Endothelial cell of umbilical vein (primary cell): ENCODE measurements at regions of chr12 and their contacts with region 1.

Region 1: GRCh38 chr12:103930034-103930786 is at the start of gene HSP90B1:
- DNase-seq: peak; percentile 100
- H3K4me3 ChIP-seq: peak within 1 kb of the TSS; percentile 86 to 98 (median 86)
- H3K27ac ChIP-seq: peak within 1 kb of the TSS; percentile 91
- H3K4me1 ChIP-seq: peaks cover 35% of the 10 kb centered on the region
- H3K27me3 ChIP-seq: no peaks in the 10 kb centered on the region
- CTCF ChIP-seq: no peak
- POLR2A ChIP-seq: peak; percentile 96
- total RNA-seq, gene HSP90B1: 1,253 and 1,310 TPM in 2 replicates

Region 2: DNA sequence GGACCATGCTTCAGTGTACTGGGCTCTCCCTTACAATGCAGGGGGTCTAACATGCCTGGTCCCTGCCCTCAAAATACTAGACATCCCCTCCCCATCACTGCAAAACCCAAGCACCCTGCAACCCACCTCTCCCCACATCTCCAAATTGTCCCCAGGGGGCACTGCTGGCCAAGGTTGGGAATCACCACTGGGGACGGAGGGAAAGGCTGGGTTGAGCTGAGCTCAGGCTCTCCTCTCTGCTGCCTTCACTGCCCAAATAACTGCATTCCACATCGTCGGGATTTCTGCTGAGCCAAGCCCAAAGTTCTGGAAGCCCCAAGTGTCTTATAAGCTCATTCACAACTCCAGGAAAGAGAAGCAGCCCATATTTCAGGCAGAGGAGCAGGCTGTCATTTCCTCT is 158.7 kb before region 1 on chr12:
- CTCF ChIA-PET with region 1: interaction called, 6 read pairs
- POLR2A ChIA-PET with region 1: no interaction called
- dilution Hi-C with region 1: no loop called
- intact Hi-C with region 1: loop called (anchors 1 kb)
- DNase-seq: peak; percentile 46
- H3K4me3 ChIP-seq: no peak overlapping the region
- H3K27ac ChIP-seq: no peak overlapping the region
- H3K4me1 ChIP-seq: no peaks in the 10 kb centered on the region
- H3K27me3 ChIP-seq: no peaks in the 10 kb centered on the region
- CTCF ChIP-seq: peak; percentile 56 to 70
- POLR2A ChIP-seq: no peak

Region 3: DNA sequence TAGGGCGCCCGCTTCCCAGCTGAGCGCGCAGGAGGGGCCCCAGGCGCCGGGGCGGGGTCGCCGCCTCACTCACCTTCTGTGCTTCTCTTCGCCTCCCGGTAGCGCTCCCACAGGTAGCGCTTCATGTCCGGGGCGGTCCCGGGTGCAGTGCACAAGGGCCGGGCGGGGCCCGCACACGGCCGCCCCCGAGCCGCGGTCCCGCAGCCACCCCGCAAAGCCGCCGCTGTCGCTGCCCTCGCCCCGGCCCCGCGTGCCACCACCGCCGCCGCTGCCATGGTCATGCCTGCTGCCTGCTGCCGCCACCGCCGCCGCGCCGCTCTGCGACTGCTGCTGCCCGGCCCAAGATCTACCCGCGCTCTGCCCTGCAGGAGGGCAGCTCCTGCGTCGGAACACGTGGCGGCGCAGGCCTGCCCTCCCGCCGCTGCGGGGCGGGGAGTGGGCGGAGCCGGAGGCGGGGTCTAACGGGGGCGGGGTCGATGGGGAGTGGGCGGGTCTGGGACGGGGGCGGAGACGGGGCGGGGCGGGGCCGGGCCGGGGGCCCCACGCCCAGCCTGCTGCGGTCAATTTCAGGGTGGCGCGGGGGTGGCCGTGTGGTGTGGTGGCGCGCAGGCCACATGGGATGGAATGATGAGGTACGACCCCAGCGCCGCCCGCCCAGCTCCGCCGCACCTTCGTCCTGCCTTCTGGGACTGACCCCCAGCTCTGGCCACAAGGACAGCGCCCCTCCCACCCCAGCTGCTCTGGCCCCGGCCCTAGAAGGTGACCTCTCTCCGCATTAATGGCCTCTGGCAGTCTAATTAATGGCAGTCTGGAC is 89.1 kb before region 1 on chr12 and contains the start of gene NT5DC3:
- CTCF ChIA-PET with region 1: interaction called, 4 read pairs
- POLR2A ChIA-PET with region 1: no interaction called
- dilution Hi-C with region 1: no loop called
- intact Hi-C with region 1: loop called (anchors 1 kb)
- DNase-seq: peak; percentile 69
- H3K4me3 ChIP-seq: peak within 1 kb of the TSS; percentile 72 to 85 (median 75)
- H3K27ac ChIP-seq: no peak within 1 kb of the TSS
- H3K4me1 ChIP-seq: peaks cover 11% of the 10 kb centered on the region
- H3K27me3 ChIP-seq: no peaks in the 10 kb centered on the region
- CTCF ChIP-seq: no peak
- POLR2A ChIP-seq: peak; percentile 86
- total RNA-seq, gene NT5DC3: 6.4 and 6.7 TPM in 2 replicates

Region 4: GRCh38 chr12:103877934-103878510 is 52.2 kb before region 1 on chr12:
- CTCF ChIA-PET with region 1: no interaction called
- POLR2A ChIA-PET with region 1: no interaction called
- dilution Hi-C with region 1: no loop called
- intact Hi-C with region 1: loop called (anchors 1 kb)
- DNase-seq: peak; percentile 52
- H3K4me3 ChIP-seq: no peak overlapping the region
- H3K27ac ChIP-seq: no peak overlapping the region
- H3K4me1 ChIP-seq: peaks cover 6% of the 10 kb centered on the region
- H3K27me3 ChIP-seq: no peaks in the 10 kb centered on the region
- CTCF ChIP-seq: peak; percentile 77 to 79
- POLR2A ChIP-seq: no peak

Region 5: GRCh38 chr12:103956516-103957027 is 26.4 kb after region 1 on chr12:
- CTCF ChIA-PET with region 1: interaction called, 4 read pairs
- POLR2A ChIA-PET with region 1: interaction called, 5 read pairs
- dilution Hi-C with region 1: no loop called
- intact Hi-C with region 1: loop called (anchors 1 kb)
- DNase-seq: no peak
- H3K4me3 ChIP-seq: peak overlapping the region; percentile 60 to 86 (median 83)
- H3K27ac ChIP-seq: peak overlapping the region; percentile 2
- H3K4me1 ChIP-seq: peaks cover 9% of the 10 kb centered on the region
- H3K27me3 ChIP-seq: no peaks in the 10 kb centered on the region
- CTCF ChIP-seq: no peak
- POLR2A ChIP-seq: no peak

Region 6: GRCh38 chr12:103965590-103966504 is 35.6 kb after region 1 on chr12 and contains the start of gene TDG:
- CTCF ChIA-PET with region 1: no interaction called
- POLR2A ChIA-PET with region 1: interaction called, 12 read pairs
- dilution Hi-C with region 1: no loop called
- intact Hi-C with region 1: loop called (anchors 1 kb)
- DNase-seq: peak; percentile 99
- H3K4me3 ChIP-seq: peak within 1 kb of the TSS; percentile 88 to 98 (median 93)
- H3K27ac ChIP-seq: peak within 1 kb of the TSS; percentile 74
- H3K4me1 ChIP-seq: peaks cover 10% of the 10 kb centered on the region
- H3K27me3 ChIP-seq: no peaks in the 10 kb centered on the region
- CTCF ChIP-seq: peak in 1 of 2 donors; percentile 14
- POLR2A ChIP-seq: peak; percentile 99
- total RNA-seq, gene TDG: 35.1 and 36.8 TPM in 2 replicates